GM10248 (cell line): ENCODE measurements at regions of chr2 and their contacts with region 1.

Region 1: GRCh38 chr2:143128681-143129580 is at the start of gene ARHGAP15:
- DNase-seq: peak; percentile 56
- CTCF ChIP-seq: peak; percentile 6

Region 2: DNA sequence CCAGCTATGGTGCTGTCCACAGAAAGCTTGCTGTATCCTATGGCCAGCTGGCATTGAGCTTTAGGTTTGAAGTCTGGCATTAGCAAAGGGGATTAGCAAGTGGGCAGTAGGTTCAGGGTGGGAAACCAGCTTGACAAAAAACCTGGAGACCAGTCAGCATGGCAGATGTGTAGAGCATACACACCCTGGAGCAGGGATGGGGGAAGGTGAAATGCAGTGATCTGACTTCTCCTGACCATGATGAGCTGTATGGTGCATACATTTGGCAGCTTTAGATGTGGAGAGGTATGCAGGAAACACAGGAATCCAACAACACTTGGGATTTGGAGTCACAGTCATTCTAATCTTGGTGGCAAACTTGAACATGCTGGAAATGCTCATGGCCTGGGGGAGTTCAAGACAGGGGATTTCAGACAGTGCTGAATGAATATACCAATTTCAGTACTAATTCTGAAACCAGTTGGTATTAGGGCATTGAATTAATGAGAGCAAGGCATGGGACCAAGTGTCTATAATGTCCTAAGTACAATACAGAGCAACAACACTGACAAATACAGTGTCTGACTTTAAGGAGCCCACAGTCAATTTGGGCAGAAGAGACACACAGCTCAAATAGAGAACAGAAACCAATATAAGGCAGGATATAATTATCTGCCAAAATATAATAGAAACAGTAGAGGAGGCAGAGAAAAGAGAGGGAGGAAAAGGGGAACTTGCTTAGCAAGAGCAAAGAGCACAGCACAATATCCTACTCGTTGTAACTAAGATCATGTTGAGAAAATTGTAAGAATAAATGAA is 12.1 kb after region 1 on chr2:
- CTCF ChIA-PET with region 1: interaction called, 19 read pairs
- POLR2A ChIA-PET with region 1: no interaction called
- DNase-seq: no peak
- CTCF ChIP-seq: no peak

Region 3: DNA sequence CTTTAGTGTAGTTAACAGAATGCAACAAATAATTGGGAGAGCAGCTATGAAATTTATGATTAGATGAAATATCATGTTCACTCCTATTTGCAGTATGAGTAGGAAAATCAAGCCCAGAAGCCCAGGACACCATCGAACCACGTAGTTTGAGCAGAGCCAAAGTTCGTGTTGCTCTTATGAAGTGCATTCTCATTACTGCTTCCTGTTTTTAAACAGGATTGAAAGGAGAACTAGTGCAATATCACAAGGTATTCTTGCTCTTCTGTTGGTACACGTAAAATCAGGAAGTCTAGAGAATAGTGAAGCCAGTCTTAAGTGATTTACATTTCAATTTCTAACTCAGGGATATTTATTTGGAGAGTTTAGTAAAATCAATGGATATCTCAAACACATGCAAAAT is 21.4 kb after region 1 on chr2:
- CTCF ChIA-PET with region 1: interaction called, 16 read pairs
- POLR2A ChIA-PET with region 1: interaction called, 3 read pairs
- DNase-seq: no peak
- CTCF ChIP-seq: no peak

Region 4: GRCh38 chr2:143357966-143358365 is 229.0 kb after region 1 on chr2:
- CTCF ChIA-PET with region 1: no interaction called
- POLR2A ChIA-PET with region 1: no interaction called
- DNase-seq: no peak
- CTCF ChIP-seq: no peak